ENCODE measurements at regions of chr17 and their contacts with region 1.

Region 1: DNA sequence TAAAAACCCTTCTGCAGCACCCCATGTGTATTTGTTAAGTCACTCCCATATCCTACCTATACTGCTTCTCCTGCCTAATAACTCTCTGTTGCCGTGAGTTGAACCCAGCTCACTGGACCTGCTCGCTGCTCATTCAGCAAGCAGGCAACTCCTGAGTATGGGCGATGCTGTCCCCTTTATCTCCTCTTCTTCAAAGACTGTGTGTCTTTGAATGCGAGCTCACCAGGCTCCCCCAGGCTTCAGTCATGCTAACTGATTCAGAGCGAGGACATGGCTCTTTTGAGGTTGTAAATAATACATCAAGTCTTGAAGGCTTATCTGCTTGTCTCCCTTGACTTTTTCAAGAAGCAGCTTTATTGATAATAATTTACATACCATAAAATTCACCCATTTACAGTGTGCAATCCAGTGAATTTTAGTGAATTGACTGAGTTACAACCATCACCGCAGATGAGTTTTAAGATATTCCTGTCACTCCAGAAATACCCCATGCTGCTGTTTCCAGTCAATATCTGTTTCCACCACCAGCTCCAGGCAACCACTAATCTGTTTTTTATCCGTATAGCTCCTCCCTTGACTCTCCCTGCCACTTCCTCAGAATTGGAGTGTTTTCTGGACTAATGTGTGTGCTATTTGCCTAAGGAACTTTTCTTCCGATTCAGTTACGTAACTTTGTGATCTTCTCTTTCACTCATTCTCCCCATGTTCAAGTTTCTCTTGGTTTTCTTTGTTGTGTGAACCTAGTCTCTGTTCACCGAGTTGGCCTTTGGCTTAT is 132.2 kb downstream of the SPECC1 start:
- DNase-seq: no peak
- H3K4me3 ChIP-seq: no peak overlapping the region
- H3K4me3 Mint-ChIP-seq: no peak overlapping the region
- H3K27ac Mint-ChIP-seq: no peak overlapping the region
- H3K4me1 ChIP-seq: no peaks in the 10 kb centered on the region
- H3K4me1 Mint-ChIP-seq: no peaks in the 10 kb centered on the region
- H3K27me3 ChIP-seq: no peaks in the 10 kb centered on the region
- H3K27me3 Mint-ChIP-seq: no peaks in the 10 kb centered on the region
- CTCF ChIP-seq: no peak

Region 2: GRCh38 chr17:19533036-19533717 is 608.2 kb before region 1 on chr17:
- CTCF ChIA-PET with region 1: no interaction called
- POLR2A ChIA-PET with region 1: interaction called, 11 read pairs
- intact Hi-C with region 1: no loop called
- DNase-seq: no peak
- H3K4me3 ChIP-seq: peak overlapping the region; percentile 15; the same call in 1 of the 2 replicates
- H3K4me3 Mint-ChIP-seq: peak overlapping the region; percentile 62
- H3K27ac Mint-ChIP-seq: no peak overlapping the region
- H3K4me1 ChIP-seq: peaks cover under 1% of the 10 kb centered on the region; the same call in 1 of the 2 replicates
- H3K4me1 Mint-ChIP-seq: peaks cover 14% of the 10 kb centered on the region
- H3K27me3 ChIP-seq: no peaks in the 10 kb centered on the region; the same call in none of the 2 replicates
- H3K27me3 Mint-ChIP-seq: peaks cover 20% of the 10 kb centered on the region
- CTCF ChIP-seq: no peak

Region 3: GRCh38 chr17:19833914-19834313 is 307.5 kb before region 1 on chr17:
- CTCF ChIA-PET with region 1: no interaction called
- POLR2A ChIA-PET with region 1: no interaction called
- intact Hi-C with region 1: no loop called
- DNase-seq: no peak
- H3K4me3 ChIP-seq: no peak overlapping the region
- H3K4me3 Mint-ChIP-seq: no peak overlapping the region
- H3K27ac Mint-ChIP-seq: no peak overlapping the region
- H3K4me1 ChIP-seq: no peaks in the 10 kb centered on the region
- H3K4me1 Mint-ChIP-seq: no peaks in the 10 kb centered on the region
- H3K27me3 ChIP-seq: no peaks in the 10 kb centered on the region
- H3K27me3 Mint-ChIP-seq: no peaks in the 10 kb centered on the region
- CTCF ChIP-seq: no peak

Region 4: GRCh38 chr17:20103454-20104446 is 37.6 kb before region 1 on chr17:
- CTCF ChIA-PET with region 1: no interaction called
- POLR2A ChIA-PET with region 1: no interaction called
- intact Hi-C with region 1: no loop called
- DNase-seq: peak in 1 of 2 experiments; percentile 41
- H3K4me3 ChIP-seq: no peak overlapping the region
- H3K4me3 Mint-ChIP-seq: peak overlapping the region; percentile 32
- H3K27ac Mint-ChIP-seq: peak overlapping the region; percentile 83
- H3K4me1 ChIP-seq: no peaks in the 10 kb centered on the region
- H3K4me1 Mint-ChIP-seq: peaks cover 8% of the 10 kb centered on the region
- H3K27me3 ChIP-seq: no peaks in the 10 kb centered on the region
- H3K27me3 Mint-ChIP-seq: no peaks in the 10 kb centered on the region
- CTCF ChIP-seq: no peak

Region 5: GRCh38 chr17:20155258-20156195 is 14.1 kb after region 1 on chr17:
- CTCF ChIA-PET with region 1: no interaction called
- POLR2A ChIA-PET with region 1: interaction called, 12 read pairs
- intact Hi-C with region 1: no loop called
- DNase-seq: peak; percentile 100
- H3K4me3 ChIP-seq: peak overlapping the region; percentile 93
- H3K4me3 Mint-ChIP-seq: no peak overlapping the region
- H3K27ac Mint-ChIP-seq: no peak overlapping the region
- H3K4me1 ChIP-seq: no peaks in the 10 kb centered on the region; the same call in 1 of the 2 replicates
- H3K4me1 Mint-ChIP-seq: peaks cover 11% of the 10 kb centered on the region
- H3K27me3 ChIP-seq: no peaks in the 10 kb centered on the region
- H3K27me3 Mint-ChIP-seq: no peaks in the 10 kb centered on the region
- CTCF ChIP-seq: no peak

Measured in Caco-2 (cell line).